ENCODE measurements at regions of chr1 and their contacts with region 1.

Region 1: GRCh38 chr1:100132566-100133477 is at the starts of genes SASS6 and TRMT13:
- DNase-seq: peak; percentile 99
- total RNA-seq, gene SASS6: 1.2 TPM
- total RNA-seq, gene TRMT13: 8.1 TPM

Region 2: GRCh38 chr1:99969729-99970621 is 162.8 kb before region 1 on chr1 and contains the start of gene SLC35A3:
- intact Hi-C with region 1: loop called (anchors 2 kb)
- DNase-seq: peak; percentile 93
- total RNA-seq, gene SLC35A3: 9.8 TPM

Region 3: GRCh38 chr1:100074604-100075395 is 58.0 kb before region 1 on chr1:
- intact Hi-C with region 1: no loop called
- DNase-seq: no peak

Region 4: DNA sequence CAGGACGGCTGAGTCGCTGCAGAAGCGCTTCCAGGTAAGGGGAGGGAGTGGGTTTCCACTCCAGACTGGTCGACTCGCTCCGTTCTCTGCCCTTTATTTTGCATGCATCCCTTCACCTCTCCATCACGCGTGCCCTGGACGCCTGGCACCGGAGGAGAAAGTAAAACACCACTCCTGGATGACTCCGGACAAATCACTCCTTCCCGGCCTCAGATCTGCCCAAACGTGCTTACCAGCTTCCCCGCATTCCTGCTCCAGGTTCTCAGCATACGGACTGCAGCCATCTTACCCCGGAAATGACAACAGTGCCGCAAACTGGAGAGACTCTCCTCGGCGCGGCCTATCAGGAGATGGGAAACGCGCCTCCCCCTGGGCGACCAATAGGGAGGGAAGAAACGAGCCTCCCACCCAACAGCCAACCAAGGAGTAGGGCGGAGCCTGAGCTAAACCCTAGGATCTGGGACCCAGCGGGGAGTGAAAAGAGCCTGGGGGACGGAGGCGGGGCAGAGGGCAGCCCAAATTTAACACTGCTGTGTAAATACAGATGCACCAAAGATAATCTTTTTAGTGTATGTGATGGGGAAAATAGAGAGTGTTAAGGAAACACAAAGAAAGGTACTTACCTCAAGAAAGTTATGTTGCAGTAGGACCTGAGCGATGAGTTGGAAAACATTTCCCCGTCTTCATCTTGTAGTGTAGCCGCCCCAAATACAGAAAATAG is 116.9 kb after region 1 on chr1 and contains the start of gene DBT:
- intact Hi-C with region 1: loop called (anchors 2 kb)
- DNase-seq: peak; percentile 97
- total RNA-seq, gene DBT: 29.3 TPM

Region 5: DNA sequence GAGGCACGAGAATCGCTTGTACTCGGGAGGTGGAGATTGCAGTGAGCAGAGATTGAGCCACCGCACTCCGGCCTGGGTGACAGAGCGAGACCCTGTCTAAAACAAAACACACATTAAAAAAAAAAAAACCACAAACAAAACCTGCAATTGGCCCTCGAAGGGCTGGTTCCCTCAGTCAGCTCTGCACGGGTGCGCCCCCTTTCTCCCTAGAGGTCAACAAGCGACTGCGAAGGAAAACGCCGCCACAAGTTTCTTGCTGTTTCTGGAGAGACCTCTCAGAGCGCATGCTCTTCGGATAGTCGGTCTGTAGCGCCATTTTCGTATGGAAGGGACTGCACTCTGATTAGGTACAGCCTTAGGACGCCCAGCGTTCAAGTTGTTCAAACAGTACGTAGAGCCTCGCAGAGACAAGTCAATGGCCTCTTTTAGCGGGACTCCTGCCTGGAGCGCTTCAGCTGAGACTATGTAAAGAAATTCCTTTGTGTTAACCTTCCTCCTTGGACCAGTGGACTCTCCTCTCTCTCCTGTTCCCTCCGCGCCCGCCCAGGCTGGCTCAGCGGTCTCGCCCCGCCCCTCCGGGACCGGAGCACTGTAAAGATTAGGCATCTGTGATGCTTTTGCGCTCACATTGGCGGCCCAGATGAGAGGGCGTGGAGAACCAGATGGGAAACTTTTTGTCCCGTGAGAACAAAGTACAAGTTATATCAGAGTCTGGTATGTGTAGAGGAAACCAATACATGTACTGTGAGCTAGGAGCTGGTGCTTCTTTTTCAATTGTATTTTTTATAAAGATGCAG is 218.5 kb after region 1 on chr1:
- intact Hi-C with region 1: loop called (anchors 2 kb)
- DNase-seq: peak; percentile 94

Region 6: GRCh38 chr1:100895540-100896483 is 763.0 kb after region 1 on chr1 and contains the start of gene SLC30A7:
- intact Hi-C with region 1: loop called (anchors 10 kb)
- DNase-seq: peak; percentile 98
- total RNA-seq, gene SLC30A7: 8.5 TPM